Mammary epithelial cell (primary cell): ENCODE measurements at regions of chr19 and their contacts with region 1.

Region 1: GRCh38 chr19:10027158-10027693 is 13.9 kb downstream of the RDH8 start:
- DNase-seq: peak; percentile 60
- H3K4me3 ChIP-seq: no peak overlapping the region
- H3K27ac ChIP-seq: no peak overlapping the region
- H3K4me1 ChIP-seq: peaks cover 11% of the 10 kb centered on the region
- H3K27me3 ChIP-seq: peaks cover 4% of the 10 kb centered on the region
- CTCF ChIP-seq: no peak

Region 2: DNA sequence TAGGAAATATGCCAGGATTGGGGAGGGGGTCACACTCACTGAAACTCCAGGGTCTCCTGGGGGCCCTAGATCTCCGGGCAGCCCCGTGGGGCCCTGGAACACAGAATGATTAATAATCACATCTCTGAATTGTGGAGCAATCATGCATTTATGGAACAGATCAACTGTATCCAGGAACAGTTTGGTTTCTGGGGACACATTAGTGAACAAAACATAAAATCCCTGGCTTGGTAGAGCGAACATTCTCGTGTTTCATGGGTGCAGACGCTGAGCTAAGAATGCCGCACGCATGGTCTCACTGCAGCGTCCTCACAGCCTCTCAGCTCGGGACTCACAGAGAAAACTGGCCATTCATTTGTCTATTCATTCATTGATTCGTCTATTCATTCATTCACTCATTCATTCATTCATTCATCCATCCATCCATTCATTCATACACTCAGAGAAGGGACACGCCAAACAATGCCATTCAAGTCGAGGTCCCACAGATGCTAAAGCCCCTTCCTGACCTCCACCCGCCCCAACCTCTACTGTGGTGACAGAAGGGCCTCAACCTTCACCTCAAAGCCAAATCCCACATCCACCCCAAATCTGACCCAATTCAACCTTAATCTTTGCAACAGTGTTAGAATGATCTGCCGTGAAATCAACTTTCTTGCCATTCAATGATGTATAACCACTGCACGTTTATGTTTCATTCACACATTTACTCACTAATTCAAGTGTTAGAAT is 55.9 kb before region 1 on chr19:
- CTCF ChIA-PET with region 1: no interaction called
- dilution Hi-C with region 1: no loop called
- in situ Hi-C with region 1: no loop called
- intact Hi-C with region 1: no loop called
- DNase-seq: no peak
- H3K4me3 ChIP-seq: no peak overlapping the region
- H3K27ac ChIP-seq: no peak overlapping the region
- H3K4me1 ChIP-seq: no peaks in the 10 kb centered on the region
- H3K27me3 ChIP-seq: no peaks in the 10 kb centered on the region
- CTCF ChIP-seq: no peak

Region 3: DNA sequence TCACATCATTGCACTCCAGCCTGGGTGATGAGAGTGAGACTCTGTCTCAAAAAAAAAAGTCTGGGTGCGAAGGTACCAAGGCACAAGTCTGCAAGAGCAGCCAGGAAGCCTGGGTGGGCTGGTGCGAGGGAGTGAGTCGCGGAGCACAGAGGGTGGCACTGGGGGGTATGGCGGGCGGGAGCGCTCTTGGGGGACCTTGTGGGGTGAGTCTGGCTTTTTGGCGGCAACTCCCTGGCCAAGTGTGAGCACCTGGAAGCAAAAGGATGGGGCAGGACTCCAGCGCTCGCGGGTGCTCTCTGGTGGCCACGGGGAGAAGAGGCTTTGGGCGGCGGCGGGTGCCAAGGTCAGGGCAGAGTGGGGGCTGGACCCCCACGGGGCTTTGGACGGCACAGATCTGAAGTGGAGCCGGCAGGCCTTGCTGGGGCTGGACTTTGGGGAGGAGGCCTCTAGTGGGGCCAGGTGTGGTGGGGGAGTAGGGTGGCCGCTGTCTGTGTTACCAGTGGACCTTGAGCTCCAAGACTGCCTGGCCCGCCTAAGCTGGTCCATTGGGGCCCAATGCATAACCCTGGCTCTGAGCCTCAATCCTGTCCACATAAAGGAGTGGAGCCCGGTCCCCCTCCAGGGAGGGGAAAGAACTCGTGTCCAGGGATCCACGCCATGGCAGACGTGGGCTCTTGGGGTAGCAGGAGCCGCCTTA is 85.8 kb after region 1 on chr19:
- CTCF ChIA-PET with region 1: no interaction called
- dilution Hi-C with region 1: no loop called
- in situ Hi-C with region 1: no loop called
- intact Hi-C with region 1: loop called (anchors 2 kb)
- DNase-seq: no peak
- H3K4me3 ChIP-seq: no peak overlapping the region
- H3K27ac ChIP-seq: no peak overlapping the region
- H3K4me1 ChIP-seq: peaks cover 5% of the 10 kb centered on the region
- H3K27me3 ChIP-seq: no peaks in the 10 kb centered on the region
- CTCF ChIP-seq: peak; percentile 44 to 77